ENCODE measurements at regions of chr10 and their contacts with region 1.

Region 1: DNA sequence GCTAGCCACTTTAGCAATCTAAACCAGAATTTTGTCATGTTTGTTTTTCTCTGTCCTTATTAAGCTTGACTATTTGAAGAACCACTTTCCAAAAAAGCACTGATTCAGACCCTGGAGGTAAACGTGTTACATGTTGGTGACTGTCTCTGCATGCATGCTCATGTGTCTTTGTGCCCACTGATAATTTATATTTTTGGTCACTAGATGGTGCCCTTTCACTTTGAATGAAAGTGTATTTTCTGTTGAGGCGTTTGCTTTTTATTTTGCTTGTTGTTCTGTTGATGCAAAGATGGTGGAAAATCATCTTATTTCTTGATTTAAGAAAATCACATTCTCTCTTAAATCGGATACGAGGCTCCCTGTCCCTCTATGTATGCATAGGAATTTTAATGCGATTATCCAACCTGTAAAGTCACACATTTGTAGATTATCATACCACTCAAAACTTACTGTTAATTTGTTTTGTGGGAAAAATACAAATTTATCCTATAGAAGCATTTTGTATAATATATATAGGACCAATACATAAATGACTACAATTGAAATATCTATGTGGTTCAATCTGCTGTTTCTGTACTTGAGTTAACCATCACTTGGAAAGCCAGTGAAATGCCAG is 269.3 kb downstream of the BICC1 start:
- DNase-seq: no peak
- H3K4me3 ChIP-seq: no peak overlapping the region
- H3K27ac ChIP-seq: no peak overlapping the region
- H3K27me3 ChIP-seq: no peaks in the 10 kb centered on the region
- CTCF ChIP-seq: peak; percentile 58

Region 2: DNA sequence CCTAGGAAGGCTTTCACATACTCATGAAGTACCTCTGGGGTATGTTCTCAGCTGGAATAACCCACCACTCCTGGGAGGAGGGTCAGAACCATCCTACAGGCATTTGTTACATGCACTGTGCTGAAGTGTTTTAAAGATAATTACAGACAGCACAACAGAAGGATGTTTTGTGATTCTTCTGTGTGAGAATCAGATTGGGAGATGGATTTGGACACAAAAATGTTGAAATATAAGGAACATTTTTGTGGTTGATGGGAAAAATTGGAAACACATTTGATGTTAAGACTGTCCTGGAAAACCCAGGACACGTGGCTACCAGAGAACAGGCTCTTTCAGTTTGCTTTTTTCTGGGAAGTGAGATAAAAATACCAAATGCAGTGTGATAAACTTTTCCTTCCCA is 207.9 kb before region 1 on chr10:
- CTCF ChIA-PET with region 1: interaction called, 11 read pairs
- POLR2A ChIA-PET with region 1: no interaction called
- DNase-seq: no peak
- H3K4me3 ChIP-seq: no peak overlapping the region
- H3K27ac ChIP-seq: no peak overlapping the region
- H3K27me3 ChIP-seq: no peaks in the 10 kb centered on the region
- CTCF ChIP-seq: no peak

Region 3: GRCh38 chr10:58802047-58802446 is 20.1 kb after region 1 on chr10:
- CTCF ChIA-PET with region 1: no interaction called
- POLR2A ChIA-PET with region 1: no interaction called
- DNase-seq: no peak
- H3K4me3 ChIP-seq: no peak overlapping the region
- H3K27ac ChIP-seq: no peak overlapping the region
- H3K27me3 ChIP-seq: no peaks in the 10 kb centered on the region
- CTCF ChIP-seq: no peak

Region 4: DNA sequence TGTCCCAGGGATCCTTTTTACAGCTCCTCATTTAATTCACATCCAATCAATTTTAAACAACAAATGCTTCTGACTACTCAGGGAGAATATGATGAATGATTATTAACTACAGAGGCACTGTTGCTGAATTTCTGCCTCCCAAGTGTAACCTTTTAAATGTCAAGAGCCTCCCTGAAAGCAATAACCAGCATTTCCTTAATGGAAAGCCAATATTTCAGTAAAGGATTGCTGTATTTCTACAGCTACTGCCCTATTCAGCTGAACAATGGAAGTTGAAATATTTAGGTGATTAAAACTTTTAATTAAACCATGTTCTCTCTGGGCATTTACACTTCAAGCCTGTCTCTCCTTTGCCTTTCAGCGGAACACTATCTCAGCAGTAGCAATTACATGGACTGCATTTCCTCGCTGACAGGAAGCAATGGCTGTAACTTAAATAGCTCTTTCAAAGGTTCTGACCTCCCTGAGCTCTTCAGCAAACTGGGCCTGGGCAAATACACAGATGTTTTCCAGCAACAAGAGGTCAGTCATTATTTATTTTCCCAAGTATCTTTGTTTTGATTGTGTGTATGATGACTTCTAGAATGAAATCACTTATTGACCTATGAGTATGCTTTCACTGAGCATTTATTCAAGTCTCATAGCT is 35.3 kb after region 1 on chr10:
- CTCF ChIA-PET with region 1: interaction called, 10 read pairs
- POLR2A ChIA-PET with region 1: no interaction called
- DNase-seq: no peak
- H3K4me3 ChIP-seq: no peak overlapping the region
- H3K27ac ChIP-seq: no peak overlapping the region
- H3K27me3 ChIP-seq: no peaks in the 10 kb centered on the region
- CTCF ChIP-seq: no peak